Activated CD4-positive, alpha-beta T cell treated with anti-CD3 and anti-CD28 coated beads for 36 hours (primary cell): ENCODE measurements at regions of chr11 and their contacts with region 1.

Region 1: DNA sequence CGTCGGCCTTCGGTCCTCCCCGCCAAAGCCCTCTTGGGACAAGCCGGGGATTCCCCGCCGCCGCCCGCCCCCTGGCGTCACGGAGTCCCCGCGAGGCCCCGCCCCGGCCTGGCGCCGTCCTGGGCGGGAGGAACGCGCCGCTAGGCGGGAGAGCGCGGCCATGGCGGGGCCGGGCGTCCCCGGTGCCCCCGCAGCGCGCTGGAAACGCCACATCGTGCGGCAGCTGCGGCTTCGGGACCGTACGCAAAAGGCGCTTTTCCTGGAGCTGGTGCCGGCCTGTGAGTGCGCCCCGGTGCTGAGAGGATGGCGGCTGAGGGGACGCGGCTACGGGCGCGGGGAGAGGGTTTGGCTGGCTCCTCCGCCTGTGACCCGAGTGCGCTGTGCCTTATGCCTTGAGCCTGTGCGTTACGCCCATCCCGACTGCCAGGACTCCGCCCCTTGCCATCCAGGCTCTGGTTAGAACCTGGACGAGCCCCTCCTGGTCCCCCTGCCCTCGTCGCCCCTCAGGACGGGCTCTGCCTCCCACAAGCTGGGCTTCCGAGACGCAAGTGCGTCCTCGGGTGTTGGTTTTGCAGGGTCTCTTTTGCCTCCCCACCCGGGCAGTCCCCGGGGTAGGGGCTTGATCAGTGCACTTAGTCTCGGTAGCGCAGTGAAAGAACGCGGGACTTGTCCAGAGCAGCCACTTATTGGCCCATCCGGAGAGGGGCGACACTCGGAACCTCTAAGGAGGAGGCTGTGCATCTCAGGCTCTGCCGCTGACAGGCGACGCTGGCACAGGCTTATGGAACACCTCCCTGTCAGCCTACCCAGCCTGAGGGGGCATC is at the start of gene ATG16L2:
- DNase-seq: peak; percentile 94
- ATAC-seq: peak; percentile 65
- H3K4me3 Mint-ChIP-seq: peak within 1 kb of the TSS; percentile 91
- H3K27ac Mint-ChIP-seq: peak within 1 kb of the TSS; percentile 98
- H3K4me1 Mint-ChIP-seq: peaks cover 30% of the 10 kb centered on the region
- H3K27me3 Mint-ChIP-seq: no peaks in the 10 kb centered on the region
- total RNA-seq, gene ATG16L2: 55.3 to 59.4 TPM

Region 2: GRCh38 chr11:72080256-72080974 is 734.1 kb before region 1 on chr11 and contains the starts of genes LRRC51 and NUMA1:
- CTCF ChIA-PET with region 1: no interaction called
- POLR2A ChIA-PET with region 1: no interaction called
- intact Hi-C with region 1: loop called in 1 of 2 experiments (anchors 1 kb)
- DNase-seq: peak; percentile 100
- ATAC-seq: peak; percentile 96
- H3K4me3 Mint-ChIP-seq: peak within 1 kb of the TSS; percentile 91
- H3K27ac Mint-ChIP-seq: peak within 1 kb of the TSS; percentile 94
- H3K4me1 Mint-ChIP-seq: peaks cover 37% of the 10 kb centered on the region
- H3K27me3 Mint-ChIP-seq: no peaks in the 10 kb centered on the region
- total RNA-seq, gene LRRC51: 7.7 to 11.6 TPM
- total RNA-seq, gene NUMA1: 154 to 167 TPM

Region 3: DNA sequence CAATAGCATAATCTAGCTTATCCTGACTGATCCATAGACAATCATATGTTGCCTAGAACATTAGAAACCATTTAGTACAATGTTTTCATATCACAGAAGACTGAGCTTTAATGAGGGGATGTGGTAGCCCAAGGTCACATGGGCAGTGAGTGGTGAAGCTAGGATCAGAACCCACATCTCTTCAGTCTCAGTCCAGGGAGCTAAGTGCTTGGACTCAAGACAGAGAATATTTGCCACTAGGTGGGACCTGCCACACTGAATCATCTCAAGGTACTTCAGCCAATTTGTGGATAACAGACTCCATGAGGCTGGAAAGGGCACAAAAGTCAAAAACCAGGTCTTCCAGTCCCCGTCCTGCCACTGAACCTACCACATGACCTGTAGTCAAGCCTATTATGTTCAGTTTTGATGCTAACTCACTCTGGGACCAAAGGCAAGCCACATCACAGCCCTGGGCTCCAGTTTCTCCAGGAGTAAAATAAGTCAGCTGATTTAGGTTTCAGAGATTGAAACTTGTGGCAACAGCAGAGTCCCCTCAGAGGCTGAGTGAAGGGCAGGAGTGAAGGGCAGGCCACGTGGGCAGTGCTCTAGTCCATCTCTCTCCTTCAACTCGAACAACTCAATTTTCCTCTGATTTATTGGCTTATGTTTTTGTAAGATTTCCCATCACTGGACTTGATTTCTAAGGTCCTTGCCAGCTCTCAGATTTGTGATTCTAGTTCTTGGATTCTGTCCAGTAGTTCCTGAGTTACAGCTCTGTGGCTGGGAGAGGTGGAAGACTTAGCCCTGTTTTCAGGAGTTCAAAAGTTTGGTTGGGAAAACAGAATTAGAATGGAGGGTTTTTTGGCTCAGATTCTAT is 485.9 kb before region 1 on chr11:
- CTCF ChIA-PET with region 1: no interaction called
- POLR2A ChIA-PET with region 1: no interaction called
- intact Hi-C with region 1: loop called in 1 of 2 experiments (anchors 1 kb)
- DNase-seq: no peak
- ATAC-seq: no peak
- H3K4me3 Mint-ChIP-seq: no peak overlapping the region
- H3K27ac Mint-ChIP-seq: no peak overlapping the region
- H3K4me1 Mint-ChIP-seq: peaks cover 25% of the 10 kb centered on the region
- H3K27me3 Mint-ChIP-seq: no peaks in the 10 kb centered on the region

Region 4: GRCh38 chr11:72736452-72737069 is 77.9 kb before region 1 on chr11:
- CTCF ChIA-PET with region 1: interaction called, 3 read pairs
- POLR2A ChIA-PET with region 1: interaction called, 4 read pairs
- intact Hi-C with region 1: loop called in 1 of 2 experiments (anchors 1 kb)
- DNase-seq: peak; percentile 84
- ATAC-seq: peak; percentile 92
- H3K4me3 Mint-ChIP-seq: peak overlapping the region; percentile 54
- H3K27ac Mint-ChIP-seq: peak overlapping the region; percentile 94
- H3K4me1 Mint-ChIP-seq: peaks cover 54% of the 10 kb centered on the region
- H3K27me3 Mint-ChIP-seq: no peaks in the 10 kb centered on the region

Region 5: DNA sequence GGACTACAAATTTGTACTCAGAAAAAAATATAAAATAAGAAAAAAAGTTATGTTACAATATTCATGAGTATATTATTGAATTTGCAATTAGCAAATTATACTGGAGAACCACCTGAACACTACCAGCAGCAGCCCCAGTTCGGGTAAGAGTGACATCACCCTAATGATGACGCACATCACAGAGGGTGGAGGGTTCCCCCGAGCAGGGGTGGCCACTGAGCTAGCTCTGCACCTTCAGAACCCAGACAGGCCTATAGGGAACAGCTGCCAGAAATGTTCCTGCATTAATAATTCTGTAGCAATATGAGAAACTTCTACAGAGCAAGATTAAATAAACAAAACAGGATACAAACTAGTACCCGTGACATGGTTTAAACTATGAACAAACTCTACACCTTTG is 44.8 kb before region 1 on chr11:
- CTCF ChIA-PET with region 1: no interaction called
- POLR2A ChIA-PET with region 1: no interaction called
- intact Hi-C with region 1: no loop called
- DNase-seq: no peak
- ATAC-seq: no peak
- H3K4me3 Mint-ChIP-seq: no peak overlapping the region
- H3K27ac Mint-ChIP-seq: no peak overlapping the region
- H3K4me1 Mint-ChIP-seq: peaks cover 2% of the 10 kb centered on the region
- H3K27me3 Mint-ChIP-seq: no peaks in the 10 kb centered on the region

Region 6: DNA sequence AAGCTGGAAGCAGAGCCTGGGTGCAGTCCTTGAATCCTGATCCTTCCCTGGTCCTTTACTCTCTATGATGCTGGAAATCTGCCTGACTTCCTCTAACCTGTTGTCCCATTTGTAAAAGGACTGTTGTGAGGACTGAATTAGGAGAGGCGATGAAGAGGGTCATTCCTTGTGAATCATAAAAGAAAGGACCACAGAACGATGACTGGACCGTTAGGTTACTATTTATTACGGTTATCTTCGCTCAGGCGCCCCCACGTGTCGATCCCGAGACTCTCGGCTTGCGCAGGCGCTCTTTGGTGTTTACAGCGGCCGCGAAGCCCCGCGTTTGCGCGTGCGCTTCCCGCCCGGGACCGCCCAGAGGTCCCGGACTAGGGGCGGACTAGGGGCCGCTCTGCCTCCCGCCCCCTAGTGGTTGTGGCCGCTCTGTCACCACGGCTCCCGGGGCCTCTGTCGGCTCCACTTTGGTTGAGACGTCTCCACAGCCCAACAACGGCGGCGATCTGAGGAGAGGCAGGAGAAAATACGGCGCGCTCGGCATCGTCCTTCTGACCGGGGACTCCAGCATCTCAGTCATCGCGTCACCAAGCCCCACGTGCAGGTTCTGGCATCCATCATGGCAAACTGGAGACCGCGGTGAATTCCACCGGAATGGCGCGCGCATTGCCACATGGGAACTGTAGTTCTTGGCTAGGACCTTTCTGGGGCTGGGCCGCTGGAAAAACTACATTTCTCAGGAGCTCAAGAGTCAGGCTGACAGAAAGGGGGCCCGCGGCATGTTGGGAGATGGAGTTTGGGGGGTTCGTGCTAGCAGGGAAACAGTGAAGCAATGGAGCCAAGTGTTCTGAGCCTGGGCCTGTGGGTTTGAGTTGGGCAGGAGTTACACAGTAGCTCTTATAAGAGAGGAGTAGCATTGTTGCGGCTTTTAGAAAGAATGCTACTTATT is 20.8 kb before region 1 on chr11 and contains the start of gene STARD10:
- CTCF ChIA-PET with region 1: interaction called, 34 read pairs
- POLR2A ChIA-PET with region 1: interaction called, 29 read pairs
- intact Hi-C with region 1: loop called (anchors 1 kb)
- DNase-seq: peak; percentile 97
- ATAC-seq: peak; percentile 93
- H3K4me3 Mint-ChIP-seq: peak within 1 kb of the TSS; percentile 84
- H3K27ac Mint-ChIP-seq: peak within 1 kb of the TSS; percentile 99
- H3K4me1 Mint-ChIP-seq: peaks cover 21% of the 10 kb centered on the region
- H3K27me3 Mint-ChIP-seq: no peaks in the 10 kb centered on the region
- total RNA-seq, gene STARD10: 8.3 to 12.9 TPM

Region 7: GRCh38 chr11:72848846-72849466 is 34.5 kb after region 1 on chr11:
- CTCF ChIA-PET with region 1: no interaction called
- POLR2A ChIA-PET with region 1: no interaction called
- intact Hi-C with region 1: no loop called
- DNase-seq: peak; percentile 62
- ATAC-seq: peak; percentile 71
- H3K4me3 Mint-ChIP-seq: no peak overlapping the region
- H3K27ac Mint-ChIP-seq: no peak overlapping the region
- H3K4me1 Mint-ChIP-seq: peaks cover 3% of the 10 kb centered on the region
- H3K27me3 Mint-ChIP-seq: no peaks in the 10 kb centered on the region

Region 8: GRCh38 chr11:72939031-72939430 is 124.5 kb after region 1 on chr11:
- CTCF ChIA-PET with region 1: no interaction called
- POLR2A ChIA-PET with region 1: no interaction called
- intact Hi-C with region 1: no loop called
- DNase-seq: no peak
- ATAC-seq: no peak
- H3K4me3 Mint-ChIP-seq: no peak overlapping the region
- H3K27ac Mint-ChIP-seq: no peak overlapping the region
- H3K4me1 Mint-ChIP-seq: no peaks in the 10 kb centered on the region
- H3K27me3 Mint-ChIP-seq: no peaks in the 10 kb centered on the region

Region 9: GRCh38 chr11:73376160-73376802 is 561.8 kb after region 1 on chr11 and contains the start of gene RELT:
- CTCF ChIA-PET with region 1: no interaction called
- POLR2A ChIA-PET with region 1: no interaction called
- intact Hi-C with region 1: loop called in 1 of 2 experiments (anchors 1 kb)
- DNase-seq: peak; percentile 96
- ATAC-seq: peak; percentile 94
- H3K4me3 Mint-ChIP-seq: peak within 1 kb of the TSS; percentile 92
- H3K27ac Mint-ChIP-seq: peak within 1 kb of the TSS; percentile 93
- H3K4me1 Mint-ChIP-seq: peaks cover 33% of the 10 kb centered on the region
- H3K27me3 Mint-ChIP-seq: no peaks in the 10 kb centered on the region
- total RNA-seq, gene RELT: 18.5 to 21.3 TPM